Activated CD8-positive, alpha-beta T cell treated with anti-CD3 and anti-CD28 coated beads, Interleukin-2, amount 10 ng/mL, durations not matched to agents 7 days and 5 days (primary cell): ENCODE measurements at regions of chr6 and their contacts with region 1.

Region 1: DNA sequence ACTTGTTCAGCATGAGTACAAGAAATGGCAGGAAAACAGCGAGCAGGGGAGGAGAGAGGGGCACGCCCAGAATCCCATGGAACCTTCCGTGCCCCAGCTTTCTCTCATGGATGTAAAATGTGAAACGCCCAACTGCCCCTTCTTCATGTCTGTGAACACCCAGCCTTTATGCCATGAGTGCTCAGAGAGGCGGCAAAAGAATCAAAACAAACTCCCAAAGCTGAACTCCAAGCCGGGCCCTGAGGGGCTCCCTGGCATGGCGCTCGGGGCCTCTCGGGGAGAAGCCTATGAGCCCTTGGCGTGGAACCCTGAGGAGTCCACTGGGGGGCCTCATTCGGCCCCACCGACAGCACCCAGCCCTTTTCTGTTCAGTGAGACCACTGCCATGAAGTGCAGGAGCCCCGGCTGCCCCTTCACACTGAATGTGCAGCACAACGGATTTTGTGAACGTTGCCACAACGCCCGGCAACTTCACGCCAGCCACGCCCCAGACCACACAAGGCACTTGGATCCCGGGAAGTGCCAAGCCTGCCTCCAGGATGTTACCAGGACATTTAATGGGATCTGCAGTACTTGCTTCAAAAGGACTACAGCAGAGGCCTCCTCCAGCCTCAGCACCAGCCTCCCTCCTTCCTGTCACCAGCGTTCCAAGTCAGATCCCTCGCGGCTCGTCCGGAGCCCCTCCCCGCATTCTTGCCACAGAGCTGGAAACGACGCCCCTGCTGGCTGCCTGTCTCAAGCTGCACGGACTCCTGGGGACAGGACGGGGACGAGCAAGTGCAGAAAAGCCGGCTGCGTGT is 11.6 kb downstream of the TNFAIP3 start:
- DNase-seq: no peak
- ATAC-seq: no peak
- H3K4me3 Mint-ChIP-seq: no peak overlapping the region
- H3K27ac Mint-ChIP-seq: peak overlapping the region; percentile 46
- H3K4me1 Mint-ChIP-seq: peaks cover 75% of the 10 kb centered on the region
- H3K27me3 Mint-ChIP-seq: no peaks in the 10 kb centered on the region

Region 2: DNA sequence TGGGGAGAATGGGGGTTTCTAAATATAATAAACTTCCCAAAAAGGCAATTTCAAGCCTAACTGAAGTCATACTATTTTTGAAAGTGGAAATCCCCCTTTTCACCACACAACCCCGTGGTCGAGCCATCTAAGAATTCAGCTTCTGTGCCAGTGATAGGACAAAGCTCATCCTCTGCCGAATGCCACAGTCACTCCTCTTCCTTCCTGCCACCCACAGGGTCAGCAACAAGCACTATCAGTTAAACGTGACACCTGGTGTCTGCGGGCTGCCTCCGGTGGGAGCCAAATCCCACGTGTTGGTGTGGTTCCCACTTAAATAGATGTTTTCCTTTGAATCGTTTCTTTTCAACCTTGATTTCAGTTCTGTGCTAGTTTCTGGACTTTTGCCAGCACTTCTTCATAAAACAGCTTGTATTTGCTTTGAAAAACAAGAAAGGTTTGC is 49.1 kb after region 1 on chr6:
- CTCF ChIA-PET with region 1: interaction called, 555 read pairs
- POLR2A ChIA-PET with region 1: interaction called, 11 read pairs
- DNase-seq: peak; percentile 87
- ATAC-seq: peak; percentile 99
- H3K4me3 Mint-ChIP-seq: peak overlapping the region; percentile 52
- H3K27ac Mint-ChIP-seq: peak overlapping the region; percentile 69
- H3K4me1 Mint-ChIP-seq: peaks cover 45% of the 10 kb centered on the region
- H3K27me3 Mint-ChIP-seq: no peaks in the 10 kb centered on the region

Region 3: DNA sequence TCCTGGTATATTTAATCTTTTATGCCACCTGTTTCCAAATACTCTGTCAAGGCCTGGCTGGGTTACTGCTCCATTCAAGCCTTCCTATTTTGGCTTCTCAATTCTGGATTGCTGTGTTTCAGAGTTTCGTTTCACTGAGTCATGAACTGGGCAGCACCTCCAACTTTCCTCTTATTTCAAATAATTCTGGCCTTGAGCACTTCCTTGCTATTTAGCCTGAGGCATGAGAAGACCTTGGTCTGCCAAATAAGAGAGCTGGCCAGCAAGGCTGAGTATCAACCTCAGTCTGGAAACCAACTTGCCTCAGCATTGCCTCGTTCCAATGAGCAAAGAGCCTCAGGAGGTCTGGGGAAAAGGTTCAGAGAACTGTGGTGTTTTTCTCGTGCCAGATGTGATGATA is 55.0 kb after region 1 on chr6:
- CTCF ChIA-PET with region 1: interaction called, 555 read pairs
- POLR2A ChIA-PET with region 1: interaction called, 12 read pairs
- DNase-seq: no peak
- ATAC-seq: no peak
- H3K4me3 Mint-ChIP-seq: no peak overlapping the region
- H3K27ac Mint-ChIP-seq: no peak overlapping the region
- H3K4me1 Mint-ChIP-seq: peaks cover 8% of the 10 kb centered on the region
- H3K27me3 Mint-ChIP-seq: no peaks in the 10 kb centered on the region

Region 4: GRCh38 chr6:138115877-138116660 is 237.4 kb after region 1 on chr6:
- CTCF ChIA-PET with region 1: no interaction called
- POLR2A ChIA-PET with region 1: no interaction called
- DNase-seq: peak; percentile 58
- ATAC-seq: peak; percentile 83
- H3K4me3 Mint-ChIP-seq: no peak overlapping the region
- H3K27ac Mint-ChIP-seq: no peak overlapping the region
- H3K4me1 Mint-ChIP-seq: peaks cover 6% of the 10 kb centered on the region
- H3K27me3 Mint-ChIP-seq: peaks cover 49% of the 10 kb centered on the region